Transverse colon (tissue), 4 donors: ENCODE measurements at regions of chr18 and their contacts with region 1.

Region 1: DNA sequence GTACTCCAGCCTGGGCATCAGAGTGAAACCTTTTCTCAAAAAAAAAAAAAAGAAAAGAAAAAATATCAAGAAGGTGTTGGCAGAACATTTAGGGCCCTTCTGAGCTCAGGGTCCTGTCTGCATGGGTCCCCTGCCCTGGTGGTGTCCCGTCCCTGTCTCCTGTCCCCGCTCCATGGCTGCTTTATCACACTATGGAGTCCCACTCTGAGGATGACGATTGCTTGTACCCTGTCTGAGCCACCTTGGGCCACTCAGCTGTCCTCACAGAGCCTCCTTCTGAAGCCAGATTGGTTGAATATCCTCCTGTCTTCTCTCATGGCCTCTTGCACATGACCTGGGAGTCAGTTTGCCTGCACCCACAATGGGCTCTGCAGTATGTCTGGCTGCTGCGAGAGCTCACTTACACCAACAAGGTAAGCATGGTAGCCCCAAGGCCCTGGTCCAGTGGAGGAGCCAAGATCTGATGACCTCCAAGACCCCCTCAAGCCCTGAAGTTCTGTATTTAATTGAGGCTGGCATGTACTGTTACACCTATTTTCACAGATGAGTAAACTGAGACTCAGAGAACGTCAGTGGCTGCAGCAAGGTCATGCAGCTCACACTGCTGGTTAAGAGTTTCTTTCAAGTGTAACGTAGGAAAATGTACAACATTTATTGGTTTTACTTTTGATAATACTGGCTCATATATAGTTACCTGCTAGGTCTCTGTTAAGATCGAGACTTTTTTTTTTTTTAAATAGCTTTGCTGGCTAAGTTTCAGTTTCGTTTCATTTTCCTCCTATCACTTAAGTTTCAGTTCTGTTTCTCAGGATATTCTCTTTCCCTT is 16.9 kb upstream of the ZCCHC2 start:
- DNase-seq: no peak
- H3K4me3 ChIP-seq: peak overlapping the region; percentile 8 to 48 (median 24)
- H3K27ac ChIP-seq: peak overlapping the region; percentile 16 to 74 (median 64)
- H3K4me1 ChIP-seq: peaks cover 4 to 18% (median 6%) of the 10 kb centered on the region in 4 donors
- H3K27me3 ChIP-seq: no peaks in the 10 kb centered on the region
- CTCF ChIP-seq: no peak
- EP300 ChIP-seq: no peak
- POLR2A ChIP-seq: no peak

Region 2: DNA sequence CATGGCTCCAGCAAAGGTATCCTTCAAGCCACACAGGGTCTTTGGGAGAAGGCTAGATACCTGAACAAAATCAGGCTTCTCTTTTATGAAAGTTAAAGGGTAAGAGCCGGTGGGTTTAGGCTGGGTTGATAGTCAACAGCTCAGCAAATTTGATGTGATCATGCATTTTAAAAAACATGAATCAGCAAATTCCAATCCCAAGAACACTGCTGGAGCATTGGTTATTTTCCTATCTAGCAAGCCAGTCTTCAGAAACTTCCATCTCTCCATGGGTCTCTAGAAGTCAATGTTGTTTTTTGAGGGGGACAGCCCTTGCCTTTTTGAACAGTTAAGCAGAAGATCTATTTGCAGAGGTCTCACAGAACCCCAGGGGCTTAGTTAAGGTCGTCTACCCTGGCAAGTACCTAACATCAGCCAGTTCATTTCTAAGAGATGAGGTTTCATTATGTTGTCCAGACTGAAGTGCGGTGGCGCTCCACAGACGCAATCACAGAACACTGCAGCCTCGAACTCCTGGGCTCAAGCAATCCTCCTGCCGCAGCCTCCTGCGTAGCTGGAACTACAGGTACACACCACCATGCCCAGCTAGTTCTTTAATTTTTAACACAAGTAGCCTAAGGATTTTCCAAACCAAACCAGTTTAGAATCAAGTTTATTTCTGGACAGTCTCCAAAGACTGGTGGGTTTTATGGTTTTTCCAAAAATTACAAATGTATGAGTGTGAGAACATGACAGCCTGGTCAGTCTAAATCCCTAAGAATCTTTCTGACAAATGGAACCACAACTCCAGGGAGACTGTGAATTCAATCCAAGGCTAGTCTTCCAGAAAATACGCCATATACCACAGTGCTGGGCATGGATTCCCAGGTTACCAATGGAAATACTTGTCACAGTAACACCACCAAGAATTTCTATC is 12.8 kb after region 1 on chr18:
- in situ Hi-C with region 1: no loop called
- intact Hi-C with region 1: loop called (anchors 2 kb)
- DNase-seq: no peak
- H3K4me3 ChIP-seq: no peak overlapping the region
- H3K27ac ChIP-seq: no peak overlapping the region
- H3K4me1 ChIP-seq: peaks cover 0 to 10% (median 1%) of the 10 kb centered on the region in 4 donors
- H3K27me3 ChIP-seq: no peaks in the 10 kb centered on the region
- CTCF ChIP-seq: no peak
- EP300 ChIP-seq: no peak
- POLR2A ChIP-seq: no peak

Region 3: GRCh38 chr18:62566199-62566598 is 60.3 kb after region 1 on chr18:
- in situ Hi-C with region 1: no loop called
- intact Hi-C with region 1: no loop called
- DNase-seq: peak; percentile 32
- H3K4me3 ChIP-seq: no peak overlapping the region
- H3K27ac ChIP-seq: no peak overlapping the region
- H3K4me1 ChIP-seq: no peaks in the 10 kb centered on the region
- H3K27me3 ChIP-seq: no peaks in the 10 kb centered on the region
- CTCF ChIP-seq: peak in 3 of 5 experiments; percentile 22 to 30 (median 25)
- EP300 ChIP-seq: no peak
- POLR2A ChIP-seq: no peak